ENCODE measurements at regions of chr4 and their contacts with region 1.

Region 1: DNA sequence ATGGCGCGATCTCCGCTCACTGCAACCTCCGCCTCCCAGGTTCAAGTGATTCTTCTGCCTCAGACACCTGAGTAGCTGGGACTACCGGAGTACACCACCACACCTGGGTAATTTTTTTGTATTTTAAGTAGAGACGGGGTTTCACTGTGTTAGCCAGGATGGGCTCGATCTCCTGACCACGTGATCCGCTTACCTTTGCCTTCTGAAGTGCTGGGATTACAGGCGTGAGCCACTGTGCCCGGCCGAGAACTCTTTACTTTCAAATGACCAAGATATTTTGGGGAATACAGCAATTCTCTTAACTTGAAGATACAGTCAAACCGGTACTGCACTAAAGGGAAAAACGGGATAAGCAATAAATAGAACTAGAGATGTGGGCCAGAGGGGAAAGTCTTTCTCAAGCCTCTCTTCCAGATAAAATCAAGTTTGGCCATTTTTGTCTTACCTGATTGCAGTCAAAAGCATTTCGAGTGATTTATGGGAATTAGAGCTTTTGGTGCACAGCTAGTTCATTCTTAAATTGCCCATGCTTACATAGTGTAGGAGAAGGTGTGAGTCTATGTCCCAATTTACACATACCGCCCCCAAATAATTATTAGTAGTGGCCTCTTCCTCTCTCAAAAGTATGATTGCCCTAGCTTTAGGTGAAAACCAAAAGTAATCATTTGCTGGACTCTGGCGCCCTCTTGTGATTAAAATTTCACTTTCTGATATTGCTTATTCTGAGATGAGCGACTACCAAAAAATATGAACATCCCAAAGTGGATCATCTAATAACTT is 53.2 kb upstream of the ABCG2 start:
- DNase-seq: peak; percentile 33 to 62 (median 45)
- ATAC-seq: peak; percentile 85
- H3K4me3 ChIP-seq: no peak overlapping the region
- H3K27ac ChIP-seq: no peak overlapping the region
- H3K4me1 ChIP-seq: no peaks in the 10 kb centered on the region; a peak in 1 of 5 replicates
- H3K27me3 ChIP-seq: peaks cover 4 to 15% of the 10 kb centered on the region in 2 experiments; a peak in 2 of 5 replicates
- CTCF ChIP-seq: peak; percentile 56 to 84 (median 62); a peak in 5 of 6 replicates
- EP300 ChIP-seq: no peak
- POLR2A ChIP-seq: no peak
- RAD21 ChIP-seq: peak; percentile 87 to 89

Region 2: GRCh38 chr4:87498446-87498900 is 713.2 kb before region 1 on chr4:
- CTCF ChIA-PET with region 1: no interaction called
- POLR2A ChIA-PET with region 1: no interaction called
- in situ Hi-C with region 1: no loop called
- intact Hi-C with region 1: loop called (anchors 10 kb)
- DNase-seq: no peak
- ATAC-seq: no peak
- H3K4me3 ChIP-seq: no peak overlapping the region
- H3K27ac ChIP-seq: no peak overlapping the region
- H3K4me1 ChIP-seq: no peaks in the 10 kb centered on the region
- H3K27me3 ChIP-seq: no peaks in the 10 kb centered on the region; a peak in 1 of 5 replicates
- CTCF ChIP-seq: no peak
- EP300 ChIP-seq: no peak
- POLR2A ChIP-seq: no peak
- RAD21 ChIP-seq: no peak

Region 3: DNA sequence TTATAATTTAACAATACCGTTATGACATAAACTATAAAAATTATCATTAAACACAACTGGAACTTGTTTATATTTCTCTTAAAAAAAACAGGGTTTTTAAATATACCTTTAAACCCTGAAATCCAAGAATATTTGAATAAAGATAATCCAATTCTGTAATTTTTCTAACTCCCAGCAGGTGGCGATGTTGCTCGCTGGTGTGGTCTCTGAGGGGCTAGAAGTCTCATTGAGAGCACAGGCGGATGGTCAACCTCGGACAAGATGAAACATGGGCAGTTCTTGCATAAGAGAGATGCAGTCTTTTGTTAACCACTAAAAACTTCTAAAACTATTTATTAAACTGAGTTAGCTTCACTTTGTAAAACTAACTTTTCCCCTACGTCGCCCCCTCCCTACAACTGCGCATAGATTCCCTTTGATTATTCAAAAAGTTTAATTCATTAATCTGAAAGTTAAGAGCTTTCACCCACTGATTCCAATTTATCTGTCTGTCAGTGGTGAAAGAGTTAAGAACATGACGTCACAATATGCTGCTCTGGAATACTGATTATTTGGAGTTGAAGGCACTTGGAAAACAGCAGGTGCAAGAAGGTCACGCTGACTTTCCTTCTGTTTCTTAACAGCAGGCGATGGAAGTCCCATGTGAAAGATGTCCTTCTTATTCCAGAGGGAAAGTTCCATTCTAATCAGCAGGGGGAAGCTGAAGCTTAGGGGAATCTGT is 532.1 kb before region 1 on chr4:
- CTCF ChIA-PET with region 1: interaction called, 6 read pairs
- POLR2A ChIA-PET with region 1: no interaction called
- in situ Hi-C with region 1: loop called (anchors 10 kb)
- intact Hi-C with region 1: loop called (anchors 2 kb)
- DNase-seq: peak; percentile 42 to 67 (median 58)
- ATAC-seq: peak; percentile 77
- H3K4me3 ChIP-seq: no peak overlapping the region
- H3K27ac ChIP-seq: no peak overlapping the region
- H3K4me1 ChIP-seq: no peaks in the 10 kb centered on the region
- H3K27me3 ChIP-seq: no peaks in the 10 kb centered on the region; a peak in 1 of 5 replicates
- CTCF ChIP-seq: peak; percentile 79 to 86 (median 81)
- EP300 ChIP-seq: no peak
- POLR2A ChIP-seq: no peak
- RAD21 ChIP-seq: peak; percentile 72 to 80

Region 4: GRCh38 chr4:87856816-87857215 is 354.8 kb before region 1 on chr4:
- CTCF ChIA-PET with region 1: interaction called, 10 read pairs
- POLR2A ChIA-PET with region 1: no interaction called
- in situ Hi-C with region 1: loop called (anchors 5 kb)
- intact Hi-C with region 1: loop called (anchors 1 kb)
- DNase-seq: no peak
- ATAC-seq: no peak
- H3K4me3 ChIP-seq: no peak overlapping the region
- H3K27ac ChIP-seq: no peak overlapping the region
- H3K4me1 ChIP-seq: no peaks in the 10 kb centered on the region
- H3K27me3 ChIP-seq: 0 out of 5 replicates have a peak, but pooled peaks cover 0 to 3% of the 10 kb centered on the region in 2 experiments
- CTCF ChIP-seq: no peak
- EP300 ChIP-seq: no peak
- POLR2A ChIP-seq: no peak
- RAD21 ChIP-seq: no peak

Region 5: GRCh38 chr4:88033309-88033708 is 178.4 kb before region 1 on chr4:
- CTCF ChIA-PET with region 1: interaction called, 17 read pairs
- POLR2A ChIA-PET with region 1: interaction called, 3 read pairs
- in situ Hi-C with region 1: loop called (anchors 5 kb)
- intact Hi-C with region 1: loop called (anchors 1 kb)
- DNase-seq: peak; percentile 22 to 71 (median 46)
- ATAC-seq: peak; percentile 86
- H3K4me3 ChIP-seq: no peak overlapping the region
- H3K27ac ChIP-seq: no peak overlapping the region
- H3K4me1 ChIP-seq: no peaks in the 10 kb centered on the region
- H3K27me3 ChIP-seq: no peaks in the 10 kb centered on the region; a peak in 1 of 5 replicates
- CTCF ChIP-seq: peak; percentile 50 to 75 (median 53); a peak in 4 of 6 replicates
- EP300 ChIP-seq: no peak
- POLR2A ChIP-seq: no peak
- RAD21 ChIP-seq: peak; percentile 61

Region 6: GRCh38 chr4:88054901-88055300 is 156.8 kb before region 1 on chr4:
- CTCF ChIA-PET with region 1: interaction called, 6 read pairs
- POLR2A ChIA-PET with region 1: no interaction called
- in situ Hi-C with region 1: no loop called
- intact Hi-C with region 1: loop called (anchors 1 kb)
- DNase-seq: peak; percentile 10 to 34 (median 13)
- ATAC-seq: peak; percentile 91
- H3K4me3 ChIP-seq: no peak overlapping the region
- H3K27ac ChIP-seq: no peak overlapping the region
- H3K4me1 ChIP-seq: no peaks in the 10 kb centered on the region
- H3K27me3 ChIP-seq: no peaks in the 10 kb centered on the region
- CTCF ChIP-seq: peak; percentile 47 to 60 (median 51); a peak in 5 of 6 replicates
- EP300 ChIP-seq: no peak
- POLR2A ChIP-seq: no peak
- RAD21 ChIP-seq: peak in 1 of 2 experiments; percentile 56; a peak in 3 of 4 replicates

Region 7: DNA sequence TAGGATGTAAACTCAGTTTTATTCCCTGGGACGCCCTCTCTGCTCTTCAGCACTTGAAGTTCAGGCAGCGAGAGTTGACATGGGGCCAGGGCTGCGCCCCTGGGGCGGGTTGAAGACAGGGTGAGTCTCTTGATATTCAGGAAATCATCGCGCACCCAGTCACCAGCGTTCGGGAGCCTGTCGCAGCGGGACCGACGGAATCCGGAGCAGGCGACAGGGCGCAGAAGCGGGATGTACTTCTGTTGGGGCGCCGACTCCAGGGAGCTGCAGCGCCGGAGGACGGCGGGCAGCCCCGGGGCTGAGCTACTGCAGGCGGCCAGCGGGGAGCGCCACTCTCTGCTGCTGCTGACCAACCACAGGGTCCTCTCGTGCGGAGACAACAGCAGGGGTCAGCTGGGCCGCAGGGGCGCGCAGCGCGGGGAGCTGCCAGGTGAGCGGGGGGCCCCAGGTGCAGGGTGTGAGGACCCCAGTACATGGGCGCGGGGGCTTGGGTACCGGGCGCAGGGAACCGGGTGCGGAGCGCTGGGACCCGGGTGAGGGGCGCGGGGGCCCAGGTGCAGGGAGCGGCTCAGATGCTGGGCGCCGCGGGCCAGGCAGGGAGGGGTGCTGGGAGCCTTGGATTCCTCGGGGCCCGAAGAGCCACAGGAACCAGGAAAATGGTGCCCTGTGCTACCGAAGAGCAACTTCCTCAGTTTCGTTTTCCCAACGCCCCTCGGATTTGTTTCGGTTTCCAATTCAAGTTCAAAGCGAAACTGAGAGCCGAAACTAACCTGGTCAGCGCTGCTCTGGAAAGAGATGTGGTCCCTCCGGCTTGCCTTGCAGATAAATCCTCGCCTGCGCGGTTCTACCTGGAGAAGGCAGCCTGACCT is 167.3 kb after region 1 on chr4 and contains the start of gene HERC6:
- CTCF ChIA-PET with region 1: no interaction called
- POLR2A ChIA-PET with region 1: no interaction called
- in situ Hi-C with region 1: no loop called
- intact Hi-C with region 1: no loop called
- DNase-seq: peak; percentile 10 to 63 (median 36)
- ATAC-seq: peak; percentile 99
- H3K4me3 ChIP-seq: peak within 1 kb of the TSS; percentile 64
- H3K27ac ChIP-seq: no peak within 1 kb of the TSS
- H3K4me1 ChIP-seq: peaks cover 0 to 8% of the 10 kb centered on the region in 2 experiments; a peak in 2 of 5 replicates
- H3K27me3 ChIP-seq: peaks cover 4 to 12% of the 10 kb centered on the region in 2 experiments; a peak in 3 of 5 replicates
- CTCF ChIP-seq: peak; percentile 53 to 77 (median 67)
- EP300 ChIP-seq: no peak
- POLR2A ChIP-seq: no peak
- RAD21 ChIP-seq: peak; percentile 7 to 42; a peak in 2 of 4 replicates
- polyA plus RNA-seq, gene HERC6: 0.01 to 0.04 TPM

Region 8: DNA sequence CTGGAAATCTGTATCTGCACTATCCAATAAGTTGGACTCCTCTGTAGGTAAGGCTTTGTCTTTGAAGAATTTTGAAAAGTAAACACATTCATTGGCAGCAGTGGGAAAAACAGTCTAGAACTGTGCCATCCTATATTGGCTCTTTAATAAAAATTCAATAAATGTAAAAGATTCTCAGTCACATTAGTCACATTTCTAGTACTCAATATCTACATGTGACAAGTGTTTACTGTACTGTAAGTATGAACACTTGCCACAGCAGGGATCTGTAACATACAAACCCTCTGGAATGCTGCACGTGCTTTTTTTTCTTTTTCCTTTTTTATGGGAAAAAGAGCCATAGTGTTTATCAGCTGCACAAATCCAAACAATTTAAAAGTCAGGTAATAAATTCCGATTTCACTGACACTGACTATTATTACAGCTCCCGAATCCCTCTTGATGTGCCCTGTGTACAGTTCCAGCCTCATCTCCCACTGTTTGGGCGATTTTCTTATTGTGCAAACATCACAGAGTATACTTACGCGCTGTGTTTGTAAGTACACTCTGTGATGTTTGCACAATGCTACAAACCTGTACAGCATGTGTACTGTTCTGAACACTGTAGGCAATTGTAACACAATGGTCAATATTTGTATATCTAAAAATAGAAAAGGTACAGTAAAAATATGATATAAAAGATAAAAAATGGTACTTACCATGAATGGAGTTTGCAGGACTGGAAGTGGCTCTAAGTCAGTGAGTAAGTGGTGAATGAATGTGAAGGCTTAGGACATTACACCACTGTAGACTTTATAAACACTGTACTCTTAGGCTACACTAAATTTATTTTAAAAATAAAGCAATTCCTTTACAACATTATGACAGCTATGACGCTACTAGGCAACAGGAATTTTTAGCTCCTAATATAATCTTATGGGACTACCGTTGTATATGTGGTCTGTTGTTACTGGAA is 303.2 kb after region 1 on chr4:
- CTCF ChIA-PET with region 1: interaction called, 4 read pairs
- POLR2A ChIA-PET with region 1: interaction called, 3 read pairs
- in situ Hi-C with region 1: loop called (anchors 5 kb)
- intact Hi-C with region 1: no loop called
- DNase-seq: no peak
- ATAC-seq: no peak
- H3K4me3 ChIP-seq: no peak overlapping the region
- H3K27ac ChIP-seq: no peak overlapping the region
- H3K4me1 ChIP-seq: peaks cover 3 to 6% of the 10 kb centered on the region in 2 experiments; a peak in 3 of 5 replicates
- H3K27me3 ChIP-seq: 0 out of 5 replicates have a peak, but pooled peaks cover 0 to 3% of the 10 kb centered on the region in 2 experiments
- CTCF ChIP-seq: no peak
- EP300 ChIP-seq: no peak
- POLR2A ChIP-seq: no peak
- RAD21 ChIP-seq: no peak

Measured in K562 (cell line).